Lower leg skin (tissue), 4 donors: ENCODE measurements at regions of chr1 and their contacts with region 1.

Region 1: DNA sequence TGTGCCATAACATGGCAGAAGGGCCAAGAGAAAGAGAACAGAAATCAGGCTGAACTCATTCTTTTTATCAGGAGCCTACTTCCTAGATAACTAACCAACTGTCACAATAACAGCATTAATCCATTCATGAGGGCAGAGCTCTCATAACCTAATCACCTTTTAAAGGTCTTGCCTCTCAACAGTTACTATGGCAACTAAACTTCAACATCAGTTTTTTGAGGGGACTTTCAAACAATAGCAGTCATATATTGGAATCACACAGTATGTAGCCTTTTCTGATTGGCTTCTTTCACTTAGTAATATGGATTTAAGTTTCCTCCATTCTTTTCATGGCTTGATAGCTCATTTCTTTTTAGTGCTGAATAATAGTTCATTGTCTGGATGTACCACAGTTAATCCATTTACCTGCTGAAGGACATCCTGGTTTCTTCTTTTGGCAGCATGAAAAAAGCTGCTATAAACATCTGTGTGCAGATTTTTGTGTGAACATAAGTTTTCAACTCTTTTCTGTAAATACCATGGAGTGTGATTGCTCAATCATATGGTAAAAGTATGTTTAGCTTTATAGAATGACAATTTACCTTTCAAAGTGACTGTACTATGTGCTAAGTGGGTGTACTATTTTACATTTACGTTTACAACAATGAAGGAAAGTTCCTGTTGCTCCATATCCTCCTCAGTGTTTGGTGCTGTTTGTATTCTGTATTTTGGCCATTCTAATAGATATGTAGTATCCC is 49.2 kb downstream of the RUNX3 start:
- DNase-seq: no peak
- H3K4me3 ChIP-seq: no peak overlapping the region
- CTCF ChIP-seq: no peak
- POLR2A ChIP-seq: no peak

Region 2: DNA sequence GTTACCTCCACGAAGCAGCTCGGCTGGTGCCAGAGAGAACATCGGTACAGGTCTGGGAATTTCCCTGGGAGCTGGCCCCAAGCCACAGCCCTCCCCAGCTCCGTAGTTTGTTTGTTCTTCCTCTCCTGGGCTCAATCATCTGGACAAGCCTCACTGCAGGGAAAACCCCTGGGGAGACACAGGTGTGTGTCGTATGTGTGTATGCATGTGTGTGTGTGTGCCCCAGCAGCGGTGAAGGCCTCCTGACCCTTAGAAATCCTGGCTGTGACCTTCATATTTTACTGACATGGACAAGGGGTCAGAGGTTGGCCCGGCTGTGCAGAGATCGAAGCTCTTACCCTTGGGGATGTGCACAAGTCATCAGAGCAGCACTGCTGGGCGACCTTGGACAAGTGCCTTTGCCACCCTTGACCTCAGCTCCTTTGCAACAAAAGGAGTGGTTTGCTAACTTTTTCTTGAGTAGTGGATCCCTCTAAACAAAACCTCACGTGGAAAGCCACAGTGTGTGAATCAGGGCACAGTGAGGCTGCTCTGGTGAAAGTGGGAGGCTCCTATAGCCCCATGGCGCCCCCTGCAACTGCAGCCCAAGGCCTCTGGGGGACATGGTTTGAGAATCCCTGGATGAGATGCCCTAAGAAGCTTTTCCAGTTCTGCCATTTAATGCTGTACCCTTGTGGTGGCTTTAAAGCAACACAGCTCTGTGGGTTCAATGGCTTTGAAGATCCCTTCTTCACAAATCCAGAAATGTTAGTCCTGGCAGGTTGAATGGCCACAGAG is 725.7 kb before region 1 on chr1:
- intact Hi-C with region 1: loop called (anchors 5 kb)
- DNase-seq: peak in 1 of 2 donors; percentile 67
- H3K4me3 ChIP-seq: no peak overlapping the region
- CTCF ChIP-seq: no peak
- POLR2A ChIP-seq: no peak

Region 3: DNA sequence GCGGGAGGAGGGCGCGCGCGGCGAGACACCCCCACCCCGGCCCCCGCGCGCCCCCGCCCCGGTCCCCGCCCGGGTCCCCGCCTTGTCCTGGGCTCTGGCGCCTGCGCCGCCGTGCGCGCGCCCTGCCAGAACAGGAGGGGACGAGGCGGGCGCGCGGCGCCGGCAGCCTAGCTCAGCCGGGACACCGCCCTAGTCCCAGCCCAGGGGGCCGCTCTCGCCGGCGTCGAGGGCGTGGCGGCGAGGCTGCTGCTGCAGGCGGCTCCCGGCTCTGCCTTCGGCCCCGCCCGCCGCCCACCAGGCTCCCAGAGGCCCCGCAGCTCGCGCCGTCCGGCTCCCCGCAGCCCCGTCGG is 378.2 kb before region 1 on chr1 and contains the start of gene RCAN3:
- intact Hi-C with region 1: no loop called
- DNase-seq: peak; percentile 68 to 95
- H3K4me3 ChIP-seq: peak within 1 kb of the TSS; percentile 63
- CTCF ChIP-seq: no peak
- POLR2A ChIP-seq: no peak
- total RNA-seq, gene RCAN3: 24.0 to 38.0 (median 29.4) TPM

Region 4: GRCh38 chr1:24727501-24728216 is 153.2 kb before region 1 on chr1:
- intact Hi-C with region 1: no loop called
- DNase-seq: peak; percentile 65 to 93
- H3K4me3 ChIP-seq: no peak overlapping the region
- CTCF ChIP-seq: no peak
- POLR2A ChIP-seq: no peak

Region 5: GRCh38 chr1:25065795-25066238 is 185.0 kb after region 1 on chr1:
- intact Hi-C with region 1: no loop called
- DNase-seq: no peak
- H3K4me3 ChIP-seq: no peak overlapping the region
- CTCF ChIP-seq: no peak
- POLR2A ChIP-seq: no peak